Sigmoid colon (tissue), 7 donors: ENCODE measurements at regions of chr10 and their contacts with region 1.

Region 1: GRCh38 chr10:15824498-15824897 is 35.8 kb downstream of the MINDY3 start:
- DNase-seq: no peak
- H3K4me3 ChIP-seq: no peak overlapping the region
- H3K27ac ChIP-seq: no peak overlapping the region
- H3K4me1 ChIP-seq: no peaks in the 10 kb centered on the region
- H3K27me3 ChIP-seq: no peaks in the 10 kb centered on the region
- CTCF ChIP-seq: peak; percentile 28 to 59 (median 51)
- EP300 ChIP-seq: no peak
- POLR2A ChIP-seq: no peak

Region 2: DNA sequence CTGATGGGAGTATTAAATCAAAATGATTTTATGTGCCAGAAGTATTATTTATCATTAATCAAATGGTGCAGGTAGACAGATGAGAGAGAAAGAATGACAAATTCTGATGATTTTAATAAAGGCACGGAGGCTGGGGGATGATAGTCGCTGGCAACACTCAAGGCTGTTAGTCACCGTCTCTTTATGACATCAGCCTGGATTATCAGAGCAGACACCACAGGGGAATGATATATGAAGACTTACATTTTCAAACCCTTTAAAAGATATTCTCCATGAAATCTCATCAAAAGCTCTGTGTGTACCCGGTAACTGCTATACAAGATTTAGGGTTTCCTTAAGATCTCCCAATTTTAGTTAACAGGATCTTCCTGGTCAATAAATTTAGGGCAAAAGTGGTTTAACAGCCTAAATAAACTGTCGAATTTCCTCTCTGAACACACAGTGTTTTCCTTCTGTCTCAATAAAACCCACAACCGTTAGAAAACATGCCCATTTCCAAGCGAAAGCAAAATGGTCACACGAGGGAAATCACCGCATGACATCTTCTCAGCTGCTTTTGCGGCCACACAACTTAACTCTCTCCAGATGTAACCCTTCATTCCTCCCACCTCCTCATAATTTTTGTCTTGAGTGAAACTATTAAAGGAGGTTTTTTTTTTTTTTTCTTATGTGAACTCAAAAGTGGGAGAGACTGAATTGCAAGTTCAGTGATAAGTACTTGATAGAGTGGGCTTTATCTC is 320.2 kb before region 1 on chr10:
- intact Hi-C with region 1: no loop called
- DNase-seq: no peak
- H3K4me3 ChIP-seq: no peak overlapping the region
- H3K27ac ChIP-seq: no peak overlapping the region
- H3K4me1 ChIP-seq: no peaks in the 10 kb centered on the region
- H3K27me3 ChIP-seq: peaks cover 0 to 9% (median 0%) of the 10 kb centered on the region in 3 donors
- CTCF ChIP-seq: no peak
- EP300 ChIP-seq: no peak
- POLR2A ChIP-seq: no peak

Region 3: DNA sequence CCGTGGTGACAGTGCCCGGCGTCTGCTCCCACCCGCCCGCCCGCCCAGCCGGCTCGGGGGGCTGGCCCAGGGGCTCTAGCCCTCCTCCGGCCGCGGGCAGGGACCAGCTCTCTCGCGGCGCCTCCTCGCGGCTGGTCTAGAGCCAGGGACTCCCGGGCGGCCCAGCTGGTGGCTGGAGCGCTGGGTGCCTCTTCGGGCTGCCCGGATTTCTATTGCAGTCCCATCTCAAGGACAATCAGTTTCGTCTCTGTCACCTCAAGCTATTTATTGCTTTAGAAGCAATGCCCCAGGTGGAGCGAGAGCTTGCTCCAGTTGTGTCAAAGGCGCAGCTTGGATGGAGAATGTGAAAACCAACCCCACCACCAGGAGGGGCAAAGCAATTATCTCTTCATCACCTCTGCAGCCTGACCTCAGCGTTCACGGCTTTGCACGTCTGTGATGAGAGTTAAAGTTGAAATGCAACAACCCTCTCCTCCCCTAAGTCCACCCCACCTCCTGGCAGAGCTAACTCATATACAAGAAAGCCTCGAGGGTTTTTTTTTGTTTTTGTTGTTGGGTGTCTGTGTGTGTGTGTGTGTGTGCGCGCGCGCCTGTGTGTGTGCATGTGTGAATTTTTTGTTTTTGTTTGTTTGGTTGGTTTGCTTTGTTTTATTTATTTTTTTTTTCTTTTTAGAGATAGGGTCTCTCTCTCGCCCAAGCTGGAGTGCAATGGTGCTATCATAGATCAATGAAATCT is 104.4 kb before region 1 on chr10 and contains the start of gene ITGA8:
- intact Hi-C with region 1: loop called (anchors 5 kb)
- DNase-seq: no peak
- H3K4me3 ChIP-seq: peak within 1 kb of the TSS; percentile 22 to 53 (median 50)
- H3K27ac ChIP-seq: peak within 1 kb of the TSS in 2 of 4 donors; percentile 36 to 70
- H3K4me1 ChIP-seq: peaks cover 0 to 25% (median 23%) of the 10 kb centered on the region in 4 donors
- H3K27me3 ChIP-seq: peaks cover 9 to 42% (median 22%) of the 10 kb centered on the region in 3 donors
- CTCF ChIP-seq: peak in 3 of 4 experiments; percentile 22 to 40 (median 31)
- EP300 ChIP-seq: no peak
- POLR2A ChIP-seq: no peak
- total RNA-seq, gene ITGA8: 0.66 to 5.7 (median 1.5) TPM